ENCODE measurements at regions of chr11 and their contacts with region 1.

Region 1: DNA sequence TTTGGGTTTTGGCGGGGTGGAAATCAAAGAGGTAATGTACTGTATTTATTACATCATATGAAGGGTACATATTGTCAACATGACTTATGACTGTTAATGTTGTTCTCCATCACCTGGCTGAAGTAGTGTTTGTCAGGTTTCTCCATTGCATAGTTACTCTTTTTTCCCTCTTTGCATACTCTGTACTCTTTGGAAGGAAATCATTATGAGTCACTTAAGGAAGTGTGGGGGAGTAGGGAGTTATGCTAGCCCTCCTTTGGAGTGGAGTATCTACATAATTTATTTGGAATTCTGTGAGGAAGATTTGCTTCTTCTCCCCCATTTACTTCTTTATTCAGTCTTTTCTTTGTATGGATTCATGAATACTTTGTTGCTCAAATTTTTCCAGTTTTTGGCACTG is 3.6 kb upstream of the PGR start:
- DNase-seq: no peak

Region 2: DNA sequence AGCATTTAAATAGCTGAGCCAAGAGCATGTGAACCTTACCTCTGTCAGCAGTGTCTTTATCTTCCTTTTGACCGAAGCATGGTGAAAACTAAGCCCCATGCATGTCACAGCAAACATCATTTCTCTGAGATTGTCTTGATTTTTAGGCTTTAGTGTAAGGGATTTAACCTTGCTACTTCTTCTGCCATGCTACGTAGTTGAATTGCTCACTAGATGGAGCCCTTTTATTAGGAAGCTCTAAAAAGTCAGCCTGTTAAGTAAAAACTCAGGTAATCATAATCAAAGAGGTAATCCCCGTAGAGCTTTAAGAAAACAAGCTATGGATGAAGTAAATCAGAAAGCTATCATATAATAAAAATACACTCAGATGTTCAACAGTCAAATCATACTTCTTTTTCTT is 153.0 kb before region 1 on chr11:
- intact Hi-C with region 1: loop called (anchors 10 kb)
- DNase-seq: no peak

Measured in cardiac septum (tissue), 1 donor.